ENCODE measurements at regions of chr1 and their contacts with region 1.

Region 1: GRCh38 chr1:6343506-6344405 is 49.8 kb downstream of the ACOT7 start:
- DNase-seq: peak; percentile 22
- ATAC-seq: peak; percentile 71
- H3K4me3 Mint-ChIP-seq: no peak overlapping the region
- H3K27ac Mint-ChIP-seq: no peak overlapping the region
- H3K4me1 Mint-ChIP-seq: peaks cover 7% of the 10 kb centered on the region
- H3K27me3 Mint-ChIP-seq: no peaks in the 10 kb centered on the region
- CTCF ChIP-seq: no peak

Region 2: DNA sequence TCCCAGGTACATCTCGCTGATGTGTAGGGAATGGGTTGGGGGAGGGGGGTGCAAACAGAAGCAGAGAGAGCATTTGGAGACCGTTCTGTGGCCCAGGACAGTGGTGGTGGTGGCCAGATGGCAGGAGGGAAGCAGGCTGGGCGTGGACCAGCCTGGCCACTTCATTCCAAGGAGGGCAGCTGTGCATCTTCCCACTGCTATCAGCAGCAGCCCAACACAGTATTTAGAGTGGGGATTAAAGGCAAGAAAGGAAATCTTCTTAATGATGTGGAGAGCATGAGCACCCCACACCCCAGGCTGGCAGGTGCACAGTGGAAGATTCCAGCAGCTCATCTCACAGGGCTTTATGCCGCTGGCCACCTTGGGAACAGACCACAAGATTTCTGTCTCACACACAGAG is 550.2 kb before region 1 on chr1:
- CTCF ChIA-PET with region 1: no interaction called
- POLR2A ChIA-PET with region 1: no interaction called
- intact Hi-C with region 1: no loop called
- DNase-seq: no peak
- ATAC-seq: no peak
- H3K4me3 Mint-ChIP-seq: no peak overlapping the region
- H3K27ac Mint-ChIP-seq: no peak overlapping the region
- H3K4me1 Mint-ChIP-seq: no peaks in the 10 kb centered on the region
- H3K27me3 Mint-ChIP-seq: peaks cover 3% of the 10 kb centered on the region
- CTCF ChIP-seq: no peak

Region 3: GRCh38 chr1:6259491-6260425 is 84.0 kb before region 1 on chr1:
- CTCF ChIA-PET with region 1: interaction called, 5 read pairs
- POLR2A ChIA-PET with region 1: no interaction called
- intact Hi-C with region 1: loop called (anchors 5 kb)
- DNase-seq: peak; percentile 57
- ATAC-seq: peak; percentile 64
- H3K4me3 Mint-ChIP-seq: peak overlapping the region; percentile 25
- H3K27ac Mint-ChIP-seq: no peak overlapping the region
- H3K4me1 Mint-ChIP-seq: peaks cover 5% of the 10 kb centered on the region
- H3K27me3 Mint-ChIP-seq: peaks cover 20% of the 10 kb centered on the region
- CTCF ChIP-seq: no peak

Region 4: DNA sequence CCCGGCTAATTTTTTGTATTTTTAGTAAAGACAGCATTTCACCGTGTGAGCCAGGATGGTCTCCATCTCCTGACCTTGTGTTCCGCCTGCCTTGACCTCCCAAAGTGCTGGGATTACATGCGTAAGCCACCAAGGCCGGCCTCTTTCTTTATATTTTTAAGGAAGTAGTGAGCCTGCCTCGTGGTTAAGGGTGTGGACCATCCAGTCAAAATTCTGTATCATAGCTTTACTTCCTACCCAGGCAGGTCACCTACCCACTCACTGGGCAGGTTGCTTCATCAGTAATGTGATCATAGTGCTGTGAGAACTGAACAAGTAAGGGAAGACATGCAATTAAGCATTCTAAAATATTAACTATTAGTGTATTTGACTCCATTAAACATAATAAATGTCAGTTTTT is 57.9 kb after region 1 on chr1:
- CTCF ChIA-PET with region 1: interaction called, 13 read pairs
- POLR2A ChIA-PET with region 1: no interaction called
- intact Hi-C with region 1: loop called (anchors 1 kb)
- DNase-seq: no peak
- ATAC-seq: no peak
- H3K4me3 Mint-ChIP-seq: no peak overlapping the region
- H3K27ac Mint-ChIP-seq: no peak overlapping the region
- H3K4me1 Mint-ChIP-seq: no peaks in the 10 kb centered on the region
- H3K27me3 Mint-ChIP-seq: peaks cover 11% of the 10 kb centered on the region
- CTCF ChIP-seq: no peak

Region 5: GRCh38 chr1:6438047-6438525 is 94.3 kb after region 1 on chr1:
- CTCF ChIA-PET with region 1: interaction called, 12 read pairs
- POLR2A ChIA-PET with region 1: no interaction called
- intact Hi-C with region 1: no loop called
- DNase-seq: peak; percentile 57
- ATAC-seq: peak; percentile 59
- H3K4me3 Mint-ChIP-seq: no peak overlapping the region
- H3K27ac Mint-ChIP-seq: no peak overlapping the region
- H3K4me1 Mint-ChIP-seq: peaks cover 7% of the 10 kb centered on the region
- H3K27me3 Mint-ChIP-seq: peaks cover 44% of the 10 kb centered on the region
- CTCF ChIP-seq: peak; percentile 68

Region 6: GRCh38 chr1:6475381-6476133 is 131.8 kb after region 1 on chr1:
- CTCF ChIA-PET with region 1: no interaction called
- POLR2A ChIA-PET with region 1: no interaction called
- intact Hi-C with region 1: loop called (anchors 2 kb)
- DNase-seq: peak; percentile 70
- ATAC-seq: peak; percentile 94
- H3K4me3 Mint-ChIP-seq: no peak overlapping the region
- H3K27ac Mint-ChIP-seq: no peak overlapping the region
- H3K4me1 Mint-ChIP-seq: no peaks in the 10 kb centered on the region
- H3K27me3 Mint-ChIP-seq: peaks cover 1% of the 10 kb centered on the region
- CTCF ChIP-seq: peak; percentile 63